ENCODE measurements at regions of chr10 and their contacts with region 1.

Region 1: DNA sequence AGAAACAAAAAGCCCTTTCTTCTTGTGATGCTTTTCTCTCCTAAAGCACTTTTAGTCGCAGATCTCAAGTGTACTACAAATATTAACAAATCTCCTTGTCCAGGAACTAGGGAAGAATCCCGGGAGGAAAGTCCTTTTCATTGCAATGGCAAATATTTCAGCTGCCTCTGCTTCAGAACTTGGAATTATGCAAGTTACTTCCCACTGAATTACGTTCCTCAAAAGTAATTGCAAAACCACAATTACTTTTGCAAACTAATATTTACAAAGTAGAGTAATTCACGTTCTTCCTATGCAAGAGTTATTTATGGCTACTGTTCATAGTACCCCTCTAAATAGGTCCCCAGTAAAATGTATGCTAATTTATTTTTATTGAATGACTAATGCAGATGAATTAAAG is 14.5 kb downstream of the PRKCQ start:
- DNase-seq: no peak
- ATAC-seq: no peak
- H3K4me3 ChIP-seq: no peak overlapping the region
- H3K27ac ChIP-seq: peak overlapping the region in 1 of 4 donors; percentile 64
- H3K4me1 ChIP-seq: peaks cover 51 to 58% of the 10 kb centered on the region in 2 donors
- H3K27me3 ChIP-seq: no peaks in the 10 kb centered on the region
- CTCF ChIP-seq: no peak
- POLR2A ChIP-seq: no peak

Region 2: DNA sequence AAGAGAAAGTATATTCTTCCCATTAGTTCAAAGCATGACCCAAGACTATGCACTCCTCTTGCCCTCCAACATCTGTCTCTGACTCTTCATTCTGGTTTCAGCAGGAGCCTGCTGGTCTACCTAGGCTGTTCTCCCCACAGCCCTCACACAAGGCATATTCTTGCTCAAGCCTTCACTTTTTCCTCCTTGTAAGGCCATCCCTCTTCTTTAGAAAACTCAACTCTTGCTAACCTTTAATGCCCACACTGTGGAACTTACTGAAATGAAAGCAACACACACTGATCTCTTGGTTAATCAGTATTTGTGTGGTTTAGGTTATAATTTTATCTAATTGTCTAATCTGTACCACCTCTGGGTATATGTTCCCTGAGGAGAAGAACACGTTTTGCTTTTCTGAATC is 61.3 kb before region 1 on chr10:
- in situ Hi-C with region 1: no loop called
- intact Hi-C with region 1: loop called (anchors 5 kb)
- DNase-seq: no peak
- ATAC-seq: no peak
- H3K4me3 ChIP-seq: no peak overlapping the region
- H3K27ac ChIP-seq: peak overlapping the region; percentile 85 to 90 (median 88)
- H3K4me1 ChIP-seq: peaks cover 9 to 18% of the 10 kb centered on the region in 2 donors
- H3K27me3 ChIP-seq: no peaks in the 10 kb centered on the region
- CTCF ChIP-seq: no peak
- POLR2A ChIP-seq: no peak

Measured in gastrocnemius medialis (tissue), 4 donors.